ENCODE measurements at regions of chr1 and their contacts with region 1.

Region 1: DNA sequence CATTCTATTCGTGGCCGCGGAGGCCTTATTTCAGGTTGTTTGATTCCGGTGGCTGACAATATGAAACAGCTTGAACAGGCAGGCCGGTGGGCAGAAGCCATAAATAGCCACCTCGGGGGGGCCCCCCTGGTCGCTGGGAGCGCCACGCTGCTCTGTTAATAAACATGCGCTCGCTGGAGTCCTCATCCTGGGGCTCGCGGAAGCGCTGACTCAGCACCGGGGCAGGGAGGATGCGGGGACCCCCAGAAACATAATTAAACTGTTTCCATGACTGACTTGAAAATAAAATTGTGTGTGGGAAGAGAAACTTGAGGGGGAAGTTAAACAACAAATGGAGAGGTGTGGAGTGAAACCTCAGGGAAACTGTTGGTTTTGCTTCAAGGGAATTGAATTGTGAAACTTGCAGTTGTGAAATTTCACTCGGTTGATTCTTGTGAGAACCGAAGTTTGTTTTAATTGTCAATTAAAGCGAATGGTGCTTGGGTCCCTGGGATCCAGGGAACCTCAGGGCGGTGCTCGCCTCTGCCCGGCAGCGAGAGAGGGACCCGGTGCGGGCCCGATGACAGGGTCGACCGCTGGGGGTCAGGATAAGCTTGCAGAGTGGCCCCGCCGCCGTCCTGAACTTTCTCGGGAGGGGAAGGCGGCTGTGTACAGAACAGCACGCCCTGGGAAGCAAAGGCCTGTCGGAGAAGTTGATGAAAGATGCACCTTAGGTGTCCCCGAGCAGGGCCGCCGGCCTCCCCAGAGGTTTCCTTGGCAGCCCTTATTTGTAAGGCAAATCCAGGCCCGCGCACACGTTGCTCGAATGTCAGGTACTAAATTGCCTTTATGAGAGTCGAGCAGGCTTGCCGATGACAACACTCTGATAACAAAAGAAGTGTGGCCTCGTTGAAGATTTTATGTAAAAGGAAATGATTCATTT is 176.9 kb upstream of the LMO4 start:
- DNase-seq: peak; percentile 87
- H3K4me3 Mint-ChIP-seq: peak overlapping the region; percentile 59
- H3K27ac Mint-ChIP-seq: no peak overlapping the region
- H3K4me1 Mint-ChIP-seq: peaks cover 36% of the 10 kb centered on the region
- H3K27me3 Mint-ChIP-seq: no peaks in the 10 kb centered on the region
- CTCF ChIP-seq: peak; percentile 68

Region 2: DNA sequence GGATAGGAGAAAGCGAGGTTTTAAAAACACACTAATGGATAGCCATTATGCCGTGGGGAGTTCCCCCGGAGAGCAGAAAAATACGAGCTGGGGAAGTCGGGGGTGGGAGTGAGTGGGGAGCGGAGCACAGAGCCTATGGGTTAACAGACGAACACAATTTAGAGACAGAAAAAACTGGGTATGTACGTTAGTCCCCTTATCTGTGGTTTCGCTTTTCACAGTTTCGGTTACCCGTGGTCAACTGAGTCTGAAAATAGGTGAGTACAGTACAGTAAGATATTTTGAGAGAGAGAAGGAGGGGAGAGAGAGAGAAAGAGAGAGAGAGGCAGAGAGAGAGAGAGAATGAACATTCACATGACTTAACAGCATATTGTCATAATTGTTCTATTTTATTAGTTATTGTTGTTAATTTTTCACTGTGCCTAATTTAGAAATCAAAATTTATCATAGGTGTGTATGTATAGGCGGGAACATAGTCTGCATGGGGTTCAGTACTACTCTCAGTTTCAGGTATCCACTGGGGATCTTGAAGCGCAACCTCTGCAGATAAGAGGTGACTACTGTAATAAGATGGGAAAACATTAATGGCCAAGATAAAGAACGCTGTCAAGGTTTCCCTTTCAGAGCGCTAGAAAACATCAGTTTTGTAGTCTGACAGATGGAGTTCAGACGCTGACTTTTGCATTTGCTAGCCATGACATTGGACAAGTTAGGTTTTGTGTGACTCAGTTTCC is 51.3 kb after region 1 on chr1:
- CTCF ChIA-PET with region 1: no interaction called
- intact Hi-C with region 1: loop called (anchors 5 kb)
- DNase-seq: no peak
- H3K4me3 Mint-ChIP-seq: no peak overlapping the region
- H3K27ac Mint-ChIP-seq: no peak overlapping the region
- H3K4me1 Mint-ChIP-seq: peaks cover 19% of the 10 kb centered on the region
- H3K27me3 Mint-ChIP-seq: no peaks in the 10 kb centered on the region
- CTCF ChIP-seq: no peak

Region 3: GRCh38 chr1:87252406-87252805 is 100.6 kb after region 1 on chr1:
- CTCF ChIA-PET with region 1: no interaction called
- intact Hi-C with region 1: loop called (anchors 5 kb)
- DNase-seq: no peak
- H3K4me3 Mint-ChIP-seq: no peak overlapping the region
- H3K27ac Mint-ChIP-seq: no peak overlapping the region
- H3K4me1 Mint-ChIP-seq: peaks cover 26% of the 10 kb centered on the region
- H3K27me3 Mint-ChIP-seq: no peaks in the 10 kb centered on the region
- CTCF ChIP-seq: no peak

Region 4: DNA sequence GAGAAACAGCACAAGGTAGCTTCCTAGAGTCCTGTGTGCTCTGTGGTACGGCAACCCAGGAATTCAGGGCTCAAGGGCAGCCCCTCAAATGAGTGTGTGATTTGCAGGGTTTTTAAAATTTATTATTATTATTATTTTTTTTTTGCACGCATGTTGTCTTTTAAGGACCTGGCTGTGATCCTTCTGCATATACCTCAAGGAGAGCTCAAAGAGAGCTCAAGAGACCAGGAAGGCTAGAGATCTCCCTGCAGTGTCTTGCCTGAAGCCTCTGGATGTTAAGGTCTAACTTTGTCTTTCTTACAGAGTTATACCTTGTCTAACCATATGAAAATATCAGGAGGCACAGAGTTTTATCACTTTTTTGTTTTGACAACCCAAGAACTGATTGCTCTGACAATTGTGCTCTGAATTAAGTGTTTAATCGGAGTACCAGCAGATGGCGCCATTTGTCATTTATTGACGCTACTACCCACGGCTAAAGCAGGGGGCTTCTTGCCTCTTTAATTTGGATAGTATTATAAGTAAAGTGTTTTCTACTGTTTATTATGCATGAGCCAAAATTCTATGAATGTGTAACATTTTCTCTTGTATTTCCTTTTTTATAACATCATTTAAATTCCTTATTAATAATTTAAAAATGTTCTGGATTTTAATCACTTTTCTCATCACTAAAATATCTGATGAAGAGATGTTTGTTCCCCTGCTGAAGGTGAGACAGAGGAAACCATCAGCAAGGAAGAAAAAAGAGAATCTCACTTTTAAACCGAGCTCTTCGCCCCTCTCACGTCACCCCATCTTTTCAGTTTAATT is 141.1 kb after region 1 on chr1:
- CTCF ChIA-PET with region 1: interaction called, 7 read pairs
- intact Hi-C with region 1: loop called (anchors 5 kb)
- DNase-seq: peak; percentile 65
- H3K4me3 Mint-ChIP-seq: no peak overlapping the region
- H3K27ac Mint-ChIP-seq: no peak overlapping the region
- H3K4me1 Mint-ChIP-seq: no peaks in the 10 kb centered on the region
- H3K27me3 Mint-ChIP-seq: no peaks in the 10 kb centered on the region
- CTCF ChIP-seq: peak; percentile 75

Region 5: GRCh38 chr1:87328272-87329050 is 176.7 kb after region 1 on chr1 and contains the start of gene LMO4:
- CTCF ChIA-PET with region 1: interaction called, 7 read pairs
- intact Hi-C with region 1: loop called (anchors 5 kb)
- DNase-seq: peak; percentile 95
- H3K4me3 Mint-ChIP-seq: peak within 1 kb of the TSS; percentile 94
- H3K27ac Mint-ChIP-seq: peak within 1 kb of the TSS; percentile 90
- H3K4me1 Mint-ChIP-seq: peaks cover 20% of the 10 kb centered on the region
- H3K27me3 Mint-ChIP-seq: no peaks in the 10 kb centered on the region
- CTCF ChIP-seq: no peak
- total RNA-seq, gene LMO4: 95.0 and 132 TPM in 2 replicates

Region 6: GRCh38 chr1:87370539-87370938 is 218.8 kb after region 1 on chr1:
- CTCF ChIA-PET with region 1: no interaction called
- intact Hi-C with region 1: no loop called
- DNase-seq: no peak
- H3K4me3 Mint-ChIP-seq: no peak overlapping the region
- H3K27ac Mint-ChIP-seq: no peak overlapping the region
- H3K4me1 Mint-ChIP-seq: no peaks in the 10 kb centered on the region
- H3K27me3 Mint-ChIP-seq: no peaks in the 10 kb centered on the region
- CTCF ChIP-seq: no peak

Region 7: DNA sequence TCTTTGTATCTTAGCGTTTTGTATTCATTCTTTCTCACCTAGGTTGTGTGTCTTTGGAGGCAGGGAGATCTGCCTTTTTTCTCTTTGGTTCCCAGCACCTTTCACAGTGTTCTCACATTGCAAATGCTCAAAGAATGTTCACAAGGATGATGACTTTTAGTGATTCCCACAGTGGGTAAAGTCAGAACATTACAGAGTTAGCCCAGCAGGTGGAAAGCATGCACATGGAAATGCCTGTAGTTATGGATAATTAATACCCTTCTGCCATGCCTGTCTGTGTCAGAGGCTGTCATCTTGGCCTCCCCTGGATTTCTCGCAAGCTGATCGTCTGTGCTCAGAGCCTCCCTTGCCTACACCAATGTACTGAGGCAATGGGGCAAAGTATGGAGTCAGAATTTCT is 635.8 kb after region 1 on chr1:
- CTCF ChIA-PET with region 1: no interaction called
- intact Hi-C with region 1: loop called (anchors 10 kb)
- DNase-seq: no peak
- H3K4me3 Mint-ChIP-seq: no peak overlapping the region
- H3K27ac Mint-ChIP-seq: peak overlapping the region; percentile 47
- H3K4me1 Mint-ChIP-seq: peaks cover 70% of the 10 kb centered on the region
- H3K27me3 Mint-ChIP-seq: no peaks in the 10 kb centered on the region
- CTCF ChIP-seq: peak; percentile 37